Naive thymus-derived CD4-positive, alpha-beta T cell (primary cell): ENCODE measurements at regions of chr11 and their contacts with region 1.

Region 1: GRCh38 chr11:15074206-15075161 is 1.1 kb downstream of the CALCB start:
- DNase-seq: peak; percentile 66 to 86 (median 75)
- ATAC-seq: peak; percentile 88
- H3K4me3 ChIP-seq: peak overlapping the region; percentile 41
- H3K4me3 Mint-ChIP-seq: peak overlapping the region; percentile 76 to 95 (median 86)
- H3K27ac ChIP-seq: no peak overlapping the region
- H3K27ac Mint-ChIP-seq: peak overlapping the region in 4 of 9 donors; percentile 29 to 86 (median 56)
- H3K4me1 ChIP-seq: peaks cover 6 to 14% of the 10 kb centered on the region in 2 donors
- H3K4me1 Mint-ChIP-seq: peaks cover 12 to 23% (median 17%) of the 10 kb centered on the region in 7 donors
- H3K27me3 ChIP-seq: peaks cover 4% of the 10 kb centered on the region in 2 donors
- H3K27me3 Mint-ChIP-seq: peaks cover 9 to 47% (median 14%) of the 10 kb centered on the region in 5 donors

Region 2: GRCh38 chr11:14300661-14301304 is 773.7 kb before region 1 on chr11:
- CTCF ChIA-PET with region 1: no interaction called
- POLR2A ChIA-PET with region 1: no interaction called
- intact Hi-C with region 1: loop called in 1 of 2 experiments (anchors 2 kb)
- DNase-seq: peak in 7 of 9 donors; percentile 19 to 47 (median 26)
- ATAC-seq: peak; percentile 88
- H3K4me3 ChIP-seq: no peak overlapping the region
- H3K4me3 Mint-ChIP-seq: no peak overlapping the region
- H3K27ac ChIP-seq: no peak overlapping the region
- H3K27ac Mint-ChIP-seq: no peak overlapping the region
- H3K4me1 ChIP-seq: no peaks in the 10 kb centered on the region
- H3K4me1 Mint-ChIP-seq: peaks cover 0 to 35% (median 0%) of the 10 kb centered on the region in 7 donors
- H3K27me3 ChIP-seq: no peaks in the 10 kb centered on the region
- H3K27me3 Mint-ChIP-seq: no peaks in the 10 kb centered on the region

Region 3: GRCh38 chr11:14499554-14500180 is 574.8 kb before region 1 on chr11 and contains the start of gene COPB1:
- CTCF ChIA-PET with region 1: no interaction called
- POLR2A ChIA-PET with region 1: no interaction called
- intact Hi-C with region 1: loop called in 1 of 2 experiments (anchors 1 kb)
- DNase-seq: peak; percentile 82 to 94 (median 92)
- ATAC-seq: peak; percentile 99
- H3K4me3 ChIP-seq: peak within 1 kb of the TSS; percentile 70
- H3K4me3 Mint-ChIP-seq: peak within 1 kb of the TSS; percentile 79 to 98 (median 92)
- H3K27ac ChIP-seq: peak within 1 kb of the TSS; percentile 91
- H3K27ac Mint-ChIP-seq: peak within 1 kb of the TSS; percentile 87 to 98 (median 94)
- H3K4me1 ChIP-seq: peaks cover 0 to 21% of the 10 kb centered on the region in 2 donors
- H3K4me1 Mint-ChIP-seq: peaks cover 27 to 54% (median 47%) of the 10 kb centered on the region in 7 donors
- H3K27me3 ChIP-seq: no peaks in the 10 kb centered on the region
- H3K27me3 Mint-ChIP-seq: no peaks in the 10 kb centered on the region
- total RNA-seq, gene COPB1: 73.4 to 102 (median 75.9) TPM

Region 4: GRCh38 chr11:14636119-14636518 is 438.4 kb before region 1 on chr11:
- CTCF ChIA-PET with region 1: no interaction called
- POLR2A ChIA-PET with region 1: no interaction called
- intact Hi-C with region 1: loop called in 1 of 2 experiments (anchors 5 kb)
- DNase-seq: peak in 3 of 9 donors; percentile 14 to 45 (median 41)
- ATAC-seq: peak; percentile 56
- H3K4me3 ChIP-seq: no peak overlapping the region
- H3K4me3 Mint-ChIP-seq: peak overlapping the region; percentile 6 to 65 (median 51)
- H3K27ac ChIP-seq: no peak overlapping the region
- H3K27ac Mint-ChIP-seq: peak overlapping the region; percentile 26 to 93 (median 77)
- H3K4me1 ChIP-seq: peaks cover 39 to 57% of the 10 kb centered on the region in 2 donors
- H3K4me1 Mint-ChIP-seq: peaks cover 39 to 77% (median 66%) of the 10 kb centered on the region in 7 donors
- H3K27me3 ChIP-seq: no peaks in the 10 kb centered on the region
- H3K27me3 Mint-ChIP-seq: no peaks in the 10 kb centered on the region

Region 5: GRCh38 chr11:14974515-14975251 is 99.8 kb before region 1 on chr11:
- CTCF ChIA-PET with region 1: interaction called, 6 read pairs
- POLR2A ChIA-PET with region 1: no interaction called
- intact Hi-C with region 1: loop called (anchors 1 kb)
- DNase-seq: peak; percentile 22 to 51 (median 47)
- ATAC-seq: peak; percentile 80
- H3K4me3 ChIP-seq: peak overlapping the region; percentile 47
- H3K4me3 Mint-ChIP-seq: peak overlapping the region; percentile 76 to 92 (median 83)
- H3K27ac ChIP-seq: no peak overlapping the region
- H3K27ac Mint-ChIP-seq: no peak overlapping the region
- H3K4me1 ChIP-seq: peaks cover 11 to 16% of the 10 kb centered on the region in 2 donors
- H3K4me1 Mint-ChIP-seq: peaks cover 20 to 38% (median 32%) of the 10 kb centered on the region in 7 donors
- H3K27me3 ChIP-seq: peaks cover 10 to 25% of the 10 kb centered on the region in 2 donors
- H3K27me3 Mint-ChIP-seq: peaks cover 66 to 89% (median 76%) of the 10 kb centered on the region in 5 donors

Region 6: DNA sequence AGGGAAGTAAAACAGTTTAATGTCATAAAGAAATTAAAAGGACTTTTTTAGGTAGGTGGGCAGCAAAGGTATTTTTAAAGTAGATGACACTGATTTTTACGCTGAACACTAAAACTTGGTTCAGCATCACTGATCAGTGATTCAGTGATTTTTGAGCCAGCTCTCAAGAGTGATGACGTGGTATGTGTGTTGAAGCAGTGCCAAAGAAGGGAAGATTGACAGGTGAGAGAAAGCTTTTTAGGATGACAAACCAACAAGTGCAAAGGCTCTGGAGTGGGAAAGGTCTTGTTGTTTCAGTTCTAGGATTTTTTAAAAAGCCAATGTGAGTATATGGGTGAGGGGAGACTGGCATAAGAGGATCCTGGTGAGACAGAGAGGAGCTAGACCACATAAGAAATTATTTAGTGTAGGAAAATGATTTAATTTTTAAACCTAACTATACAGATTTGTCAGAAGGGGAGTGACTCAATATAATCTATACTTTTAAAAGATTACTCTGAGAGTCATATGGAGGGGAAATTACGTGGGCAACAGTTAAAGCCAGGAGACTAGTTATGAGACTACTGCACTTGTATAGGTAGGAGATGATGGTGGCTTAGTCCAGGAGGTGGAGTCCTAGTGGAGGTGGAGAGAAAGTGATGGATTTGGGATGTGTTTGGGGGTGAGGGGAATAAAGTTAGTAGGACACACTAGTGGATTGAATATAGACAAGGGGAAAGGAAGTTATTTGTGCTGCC is 18.7 kb before region 1 on chr11:
- CTCF ChIA-PET with region 1: no interaction called
- POLR2A ChIA-PET with region 1: no interaction called
- intact Hi-C with region 1: no loop called
- DNase-seq: no peak
- ATAC-seq: no peak
- H3K4me3 ChIP-seq: no peak overlapping the region
- H3K4me3 Mint-ChIP-seq: no peak overlapping the region
- H3K27ac ChIP-seq: no peak overlapping the region
- H3K27ac Mint-ChIP-seq: no peak overlapping the region
- H3K4me1 ChIP-seq: no peaks in the 10 kb centered on the region
- H3K4me1 Mint-ChIP-seq: peaks cover 0 to 7% (median 0%) of the 10 kb centered on the region in 7 donors
- H3K27me3 ChIP-seq: no peaks in the 10 kb centered on the region
- H3K27me3 Mint-ChIP-seq: peaks cover 5 to 21% (median 7%) of the 10 kb centered on the region in 5 donors